ENCODE measurements at regions of chrX and their contacts with region 1.

Region 1: DNA sequence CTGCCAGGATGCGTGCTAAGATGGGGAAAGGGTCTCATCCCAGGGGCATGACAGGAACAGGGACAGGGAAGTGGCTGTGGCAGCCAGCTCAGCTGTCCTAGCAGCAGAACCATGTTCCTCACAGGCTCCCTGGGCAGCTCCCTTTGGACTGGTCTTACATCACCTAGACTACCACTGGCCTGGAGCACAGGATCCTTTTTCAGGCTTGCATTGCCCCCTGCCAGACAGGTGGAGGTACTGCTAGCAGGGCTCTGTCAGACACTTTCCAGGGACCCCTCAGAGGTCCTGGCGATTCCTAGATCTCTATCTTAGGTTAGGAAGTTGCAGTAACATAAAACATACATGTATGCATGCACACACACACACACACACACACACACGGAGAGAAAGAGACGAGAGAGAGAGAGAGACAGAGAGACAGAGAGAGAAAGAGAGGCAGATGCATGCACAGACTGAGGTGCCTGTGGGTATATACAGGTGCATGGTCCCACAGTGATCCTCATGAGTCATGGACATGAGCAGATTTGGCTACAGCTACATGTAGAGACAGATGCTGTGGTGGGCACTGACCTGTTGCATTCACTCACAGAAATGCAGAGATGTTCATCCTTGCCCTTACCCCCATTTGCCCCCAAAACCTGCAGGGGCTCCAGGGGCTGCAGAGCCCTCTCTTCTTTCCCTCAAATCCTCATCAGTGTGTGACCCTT is 63.6 kb downstream of the STARD8 start:
- DNase-seq: no peak
- ATAC-seq: peak; percentile 39 to 77 (median 61)
- H3K4me3 ChIP-seq: no peak overlapping the region
- H3K27ac ChIP-seq: peak overlapping the region in 1 of 10 donors; percentile 45
- H3K4me1 ChIP-seq: peaks cover 0 to 46% (median 17%) of the 10 kb centered on the region in 9 donors
- H3K27me3 ChIP-seq: peaks cover 0 to 6% (median 0%) of the 10 kb centered on the region in 7 donors
- CTCF ChIP-seq: peak in 7 of 9 donors; percentile 40 to 56 (median 50)

Region 2: GRCh38 chrX:68234171-68234910 is 476.7 kb before region 1 on chrX:
- intact Hi-C with region 1: no loop called
- DNase-seq: no peak
- ATAC-seq: no peak
- H3K4me3 ChIP-seq: no peak overlapping the region
- H3K27ac ChIP-seq: no peak overlapping the region
- H3K4me1 ChIP-seq: no peaks in the 10 kb centered on the region
- H3K27me3 ChIP-seq: no peaks in the 10 kb centered on the region
- CTCF ChIP-seq: no peak

Region 3: DNA sequence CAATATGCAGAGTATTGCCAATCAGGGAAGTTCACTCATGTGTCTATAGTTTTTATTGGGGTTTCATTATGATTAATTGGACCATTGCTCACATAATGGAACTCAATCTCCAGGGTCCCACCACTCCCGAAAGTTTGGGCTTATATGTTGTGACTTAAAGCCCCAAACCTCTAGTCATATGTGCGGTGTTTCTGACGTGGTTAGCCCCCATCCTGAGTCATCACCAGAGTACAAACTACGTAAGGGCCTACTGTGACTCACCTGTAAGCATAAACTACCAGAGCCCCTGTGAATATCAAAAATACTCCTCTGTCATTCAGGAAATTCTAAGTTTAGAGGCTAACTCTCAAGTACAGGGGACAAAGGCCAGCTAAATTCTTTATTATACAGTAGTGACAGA is 206.8 kb before region 1 on chrX:
- intact Hi-C with region 1: loop called in 4 of 10 experiments (anchors 10 kb)
- DNase-seq: no peak
- ATAC-seq: no peak
- H3K4me3 ChIP-seq: no peak overlapping the region
- H3K27ac ChIP-seq: no peak overlapping the region
- H3K4me1 ChIP-seq: peaks cover 0 to 57% (median 26%) of the 10 kb centered on the region in 9 donors
- H3K27me3 ChIP-seq: peaks cover 0 to 15% (median 0%) of the 10 kb centered on the region in 7 donors
- CTCF ChIP-seq: no peak

Region 4: DNA sequence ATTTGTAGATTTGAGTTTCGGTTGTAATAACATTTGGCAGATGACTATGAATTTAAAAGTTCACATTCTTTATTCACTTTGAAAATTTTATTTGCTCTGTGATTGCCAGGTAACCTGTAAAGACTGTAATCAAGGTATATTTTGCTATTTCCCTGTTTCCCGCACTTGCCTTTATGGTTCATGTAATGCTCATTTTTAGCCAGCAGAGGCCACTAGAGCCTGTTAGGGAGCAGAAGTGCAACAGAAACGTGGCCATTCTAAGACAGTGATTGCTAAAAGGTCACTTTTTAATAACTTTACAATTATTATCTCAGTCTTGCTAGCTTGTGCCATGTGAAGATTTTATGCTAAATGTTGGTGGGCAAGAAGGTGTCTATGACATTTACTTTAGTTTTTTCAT is 199.8 kb before region 1 on chrX:
- intact Hi-C with region 1: loop called (anchors 2 to 10 kb)
- DNase-seq: peak in 1 of 2 donors; percentile 26
- ATAC-seq: peak in 2 of 8 donors; percentile 50 to 58
- H3K4me3 ChIP-seq: no peak overlapping the region
- H3K27ac ChIP-seq: no peak overlapping the region
- H3K4me1 ChIP-seq: peaks cover 0 to 23% (median 5%) of the 10 kb centered on the region in 9 donors
- H3K27me3 ChIP-seq: no peaks in the 10 kb centered on the region
- CTCF ChIP-seq: peak; percentile 65 to 94 (median 72)

Region 5: DNA sequence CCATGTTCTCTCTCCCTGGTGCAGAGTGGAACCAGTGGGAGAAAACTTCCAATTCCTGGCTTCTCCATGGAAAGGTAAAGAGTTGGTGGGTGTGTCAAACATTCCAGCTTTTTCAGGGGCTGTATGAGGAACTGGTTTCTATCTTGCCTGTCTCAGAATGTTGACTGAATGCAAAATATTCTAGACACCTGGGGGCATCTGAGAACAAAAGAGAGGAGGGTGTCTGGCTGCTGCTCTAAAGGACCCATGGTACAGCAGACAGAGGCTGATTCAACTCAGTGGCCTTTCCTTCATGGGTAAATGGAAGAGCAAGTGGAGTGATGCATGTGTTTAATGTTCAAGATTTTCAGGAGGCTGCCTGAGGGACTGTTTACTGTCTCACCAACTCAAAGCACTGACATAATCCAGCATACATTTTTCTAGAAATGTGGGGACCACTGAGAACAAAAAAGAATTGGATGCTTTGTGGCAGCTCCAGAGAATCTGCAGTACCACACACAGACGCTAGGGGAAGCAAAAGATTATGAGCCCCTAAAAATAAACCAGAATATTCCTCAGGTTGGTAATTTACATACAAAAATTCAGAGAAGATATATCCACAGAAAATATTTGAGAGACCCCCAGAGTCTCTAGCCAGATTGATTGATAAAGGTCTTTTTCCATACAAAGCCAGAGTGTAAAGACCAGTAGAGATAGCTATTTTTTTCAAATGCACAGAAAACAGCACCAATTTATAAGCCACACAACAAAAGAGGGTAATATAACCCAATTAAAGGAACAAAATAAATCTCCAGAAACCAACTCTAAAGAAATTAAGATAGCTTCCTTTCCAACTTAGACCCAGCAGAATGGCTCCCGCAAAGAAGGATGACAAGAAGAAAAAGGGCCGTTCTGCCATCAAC is 111.5 kb before region 1 on chrX:
- intact Hi-C with region 1: loop called in 4 of 10 experiments (anchors 5 to 10 kb)
- DNase-seq: no peak
- ATAC-seq: no peak
- H3K4me3 ChIP-seq: no peak overlapping the region
- H3K27ac ChIP-seq: no peak overlapping the region
- H3K4me1 ChIP-seq: no peaks in the 10 kb centered on the region
- H3K27me3 ChIP-seq: no peaks in the 10 kb centered on the region
- CTCF ChIP-seq: peak; percentile 44 to 76 (median 64)

Region 6: DNA sequence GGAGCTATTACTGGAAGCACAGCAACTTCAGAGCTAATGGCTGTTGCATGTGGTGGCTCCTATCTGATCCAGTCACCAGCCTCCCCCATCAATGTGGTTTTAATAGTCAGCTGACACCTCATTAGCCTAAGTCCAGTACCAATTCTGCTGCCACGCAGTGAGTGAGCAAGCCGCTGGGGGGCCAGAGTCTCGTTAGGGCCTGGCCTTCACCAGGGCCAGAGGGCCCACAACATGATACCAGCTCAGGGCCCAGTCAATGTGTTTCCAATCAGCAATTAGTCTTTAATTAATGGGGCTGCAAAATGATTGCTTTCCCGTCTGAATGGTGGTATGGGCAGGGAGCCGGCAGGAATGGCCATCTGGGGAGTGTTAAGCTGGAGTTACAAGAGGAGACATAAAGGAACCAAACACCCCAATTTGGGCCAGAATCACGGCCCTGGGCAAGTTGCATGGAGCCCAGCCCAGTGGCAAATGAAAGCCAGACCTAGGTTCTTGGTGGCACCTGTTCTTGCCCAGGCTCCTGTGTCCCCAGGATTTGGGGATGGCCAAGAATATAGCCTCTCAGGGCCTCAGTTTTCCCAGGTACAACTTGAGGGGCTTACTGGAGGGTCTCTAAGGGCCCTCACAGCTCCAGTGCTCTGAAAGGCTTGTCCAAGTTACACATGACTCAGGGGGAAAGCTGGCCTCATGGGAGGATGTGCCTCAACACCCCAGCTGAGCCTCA is 237.0 kb after region 1 on chrX:
- intact Hi-C with region 1: no loop called
- DNase-seq: no peak
- ATAC-seq: no peak
- H3K4me3 ChIP-seq: no peak overlapping the region
- H3K27ac ChIP-seq: no peak overlapping the region
- H3K4me1 ChIP-seq: peaks cover 0 to 11% (median 0%) of the 10 kb centered on the region in 9 donors
- H3K27me3 ChIP-seq: no peaks in the 10 kb centered on the region
- CTCF ChIP-seq: no peak